ENCODE measurements at regions of chr10 and their contacts with region 1.

Region 1: DNA sequence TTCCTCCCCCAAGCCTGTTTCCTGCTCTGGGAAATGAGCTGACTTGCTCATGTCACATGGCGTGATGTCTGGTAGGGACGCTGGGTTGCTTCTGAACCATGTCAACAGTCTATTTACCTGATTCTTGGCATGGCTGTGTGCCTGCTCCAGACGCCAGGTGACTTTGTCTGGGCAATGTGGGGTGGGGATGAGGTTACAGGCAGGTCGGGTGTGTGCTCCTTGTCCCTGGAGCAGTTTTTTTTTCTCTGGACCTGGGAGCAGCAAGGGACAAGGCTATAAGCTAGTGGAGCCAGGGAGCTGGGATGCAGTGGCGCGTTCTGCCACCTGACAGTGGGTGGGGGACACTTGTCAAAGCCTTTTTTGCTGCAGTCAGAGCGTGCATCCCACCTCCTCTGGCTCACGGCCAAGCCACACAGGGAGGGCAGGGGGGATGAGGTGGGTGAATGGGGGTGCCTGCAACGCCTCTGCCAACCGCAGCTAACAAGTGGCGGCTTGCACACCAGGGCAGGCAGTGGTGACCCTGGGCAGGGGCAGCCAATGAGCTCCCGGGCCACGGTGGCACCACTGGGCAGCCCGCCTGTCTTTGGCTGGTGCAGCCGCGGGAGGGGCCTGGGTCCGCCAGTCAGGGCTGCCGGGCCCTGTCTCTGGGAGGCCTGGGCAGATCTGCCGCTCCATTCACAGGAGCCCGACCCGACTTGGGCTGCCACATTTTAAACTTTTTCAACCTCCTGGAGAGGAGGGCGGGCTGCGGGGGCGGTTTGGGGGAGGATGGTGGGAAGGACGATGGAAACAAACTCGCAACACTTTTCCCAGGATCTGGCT is 22.9 kb downstream of the DNAJB12 start:
- DNase-seq: peak; percentile 82 to 95
- H3K4me3 ChIP-seq: no peak overlapping the region
- CTCF ChIP-seq: peak in 1 of 3 donors; percentile 6
- POLR2A ChIP-seq: no peak

Region 2: DNA sequence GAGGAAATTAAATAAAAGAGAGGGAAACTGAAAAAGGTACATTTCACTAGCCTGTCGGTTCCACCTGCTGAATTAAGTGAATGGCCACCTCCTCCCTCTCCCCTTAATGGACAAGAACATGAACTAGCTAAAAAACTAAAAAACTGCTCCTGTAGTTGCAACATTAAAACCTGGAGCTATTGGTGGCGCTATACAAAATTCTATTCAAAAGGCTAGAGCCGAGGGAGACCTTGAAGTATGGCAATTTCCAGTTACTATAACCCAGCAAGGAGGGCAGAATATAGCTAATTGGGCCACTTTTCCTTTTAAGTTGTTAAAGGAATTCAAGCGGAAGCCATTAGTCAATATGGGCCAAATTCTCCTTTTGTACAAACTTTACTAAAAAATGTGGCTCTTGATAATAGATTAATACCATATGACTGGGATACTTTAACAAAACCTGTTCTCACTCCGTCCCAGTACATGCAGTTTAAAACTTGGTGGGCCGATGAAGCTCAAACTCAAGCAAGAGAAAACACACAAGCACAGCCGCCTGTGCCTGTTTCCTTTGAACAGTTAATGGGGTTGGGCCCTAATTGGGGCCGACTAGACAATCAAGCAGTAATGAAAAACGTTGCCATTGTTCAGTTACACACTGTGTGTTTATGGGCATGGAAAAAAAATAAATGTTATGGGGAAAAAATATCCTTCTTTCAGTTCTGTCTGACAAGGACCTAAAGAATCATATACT is 374.1 kb before region 1 on chr10:
- intact Hi-C with region 1: loop called (anchors 10 kb)
- DNase-seq: peak in 1 of 2 donors; percentile 34
- H3K4me3 ChIP-seq: no peak overlapping the region
- CTCF ChIP-seq: no peak
- POLR2A ChIP-seq: no peak

Region 3: GRCh38 chr10:72223743-72224101 is 108.1 kb before region 1 on chr10:
- intact Hi-C with region 1: loop called (anchors 10 kb)
- DNase-seq: no peak
- H3K4me3 ChIP-seq: no peak overlapping the region
- CTCF ChIP-seq: no peak
- POLR2A ChIP-seq: no peak

Region 4: GRCh38 chr10:72273410-72274212 is 58.2 kb before region 1 on chr10 and contains the start of gene DDIT4:
- intact Hi-C with region 1: loop called (anchors 10 kb)
- DNase-seq: peak; percentile 99 to 100
- H3K4me3 ChIP-seq: peak within 1 kb of the TSS; percentile 98
- CTCF ChIP-seq: no peak
- POLR2A ChIP-seq: peak in 1 of 2 donors; percentile 99
- total RNA-seq, gene DDIT4: 274 to 929 (median 421) TPM